SK-N-SH (cell line): ENCODE measurements at regions of chr17 and their contacts with region 1.

Region 1: DNA sequence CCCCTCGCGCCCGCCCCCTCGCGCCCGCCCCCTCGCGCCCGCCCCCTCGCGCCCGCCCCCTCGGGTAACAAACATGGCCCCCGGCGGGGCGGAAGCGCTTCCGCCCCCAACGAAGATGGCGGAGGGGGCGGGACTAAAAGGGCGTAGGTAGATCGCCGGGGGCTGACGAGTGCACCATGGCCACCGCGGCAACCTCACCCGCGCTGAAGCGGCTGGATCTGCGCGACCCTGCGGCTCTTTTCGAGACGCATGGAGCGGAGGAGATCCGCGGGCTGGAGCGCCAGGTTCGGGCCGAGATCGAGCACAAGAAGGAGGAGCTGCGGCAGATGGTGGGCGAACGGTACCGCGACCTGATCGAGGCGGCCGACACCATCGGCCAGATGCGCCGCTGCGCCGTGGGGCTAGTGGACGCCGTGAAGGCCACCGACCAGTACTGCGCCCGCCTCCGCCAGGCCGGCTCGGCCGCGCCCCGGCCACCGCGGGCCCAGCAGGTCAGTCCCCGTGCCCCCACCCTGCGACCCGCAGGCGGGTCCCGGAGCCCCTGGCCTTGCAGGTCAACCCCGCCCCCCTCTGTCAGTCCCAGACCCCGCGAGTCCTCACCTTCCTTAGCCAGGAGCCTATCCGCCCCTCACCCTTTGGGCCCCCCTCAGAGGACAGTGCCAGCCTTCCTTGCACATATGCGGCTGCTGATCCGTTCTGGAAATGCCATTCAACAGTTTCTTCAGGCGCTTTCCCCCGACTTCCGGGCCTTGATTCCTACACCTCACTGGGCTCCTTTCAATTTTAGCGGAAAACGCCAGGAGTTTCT is at the start of gene COG1:
- DNase-seq: peak; percentile 100
- H3K4me3 ChIP-seq: peak within 1 kb of the TSS; percentile 73 to 76
- H3K27ac ChIP-seq: peak within 1 kb of the TSS; percentile 85 to 95
- H3K4me1 ChIP-seq: peaks cover 5 to 8% of the 10 kb centered on the region in 2 experiments; a peak in 2 of 4 replicates
- H3K27me3 ChIP-seq: no peaks in the 10 kb centered on the region
- CTCF ChIP-seq: no peak
- EP300 ChIP-seq: no peak
- RAD21 ChIP-seq: no peak
- polyA plus RNA-seq, gene COG1: 52.8 and 53.1 TPM in 2 replicates

Region 2: DNA sequence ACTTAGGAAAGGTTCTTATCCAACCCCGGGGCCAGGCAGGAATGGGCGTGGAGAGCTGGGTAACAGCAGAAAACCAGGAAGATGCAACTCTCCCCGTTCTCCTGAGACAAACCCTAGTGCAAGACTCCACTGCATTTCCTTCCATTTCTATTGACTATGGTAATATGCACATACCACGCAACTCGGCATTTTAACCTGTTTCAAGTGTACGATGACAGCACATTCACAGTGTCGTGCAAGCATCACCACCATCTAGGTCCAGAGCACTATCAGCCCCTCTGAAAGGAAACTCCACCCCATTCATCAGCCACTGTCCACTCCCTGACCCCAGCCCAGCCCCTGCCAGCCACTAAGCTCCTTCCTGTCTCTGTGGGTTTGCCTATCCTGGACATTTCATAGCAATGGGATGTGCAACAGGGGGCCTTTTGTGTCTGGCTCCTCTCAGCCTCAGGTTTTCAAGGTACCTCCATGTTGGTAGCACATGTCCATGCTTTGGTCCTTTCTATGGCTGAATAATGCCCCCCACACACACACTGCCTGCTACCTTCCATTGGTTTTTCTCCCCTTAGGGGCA is 630.4 kb before region 1 on chr17:
- CTCF ChIA-PET with region 1: interaction called, 79 read pairs
- POLR2A ChIA-PET with region 1: no interaction called
- DNase-seq: no peak
- H3K4me3 ChIP-seq: no peak overlapping the region
- H3K27ac ChIP-seq: no peak overlapping the region
- H3K4me1 ChIP-seq: peaks cover 0 to 5% of the 10 kb centered on the region in 2 experiments; a peak in 1 of 4 replicates
- H3K27me3 ChIP-seq: no peaks in the 10 kb centered on the region
- CTCF ChIP-seq: no peak
- EP300 ChIP-seq: no peak
- RAD21 ChIP-seq: no peak

Region 3: GRCh38 chr17:72952220-72952984 is 240.7 kb before region 1 on chr17:
- CTCF ChIA-PET with region 1: interaction called, 10 read pairs
- POLR2A ChIA-PET with region 1: no interaction called
- DNase-seq: no peak
- H3K4me3 ChIP-seq: no peak overlapping the region
- H3K27ac ChIP-seq: no peak overlapping the region
- H3K4me1 ChIP-seq: peaks cover 13 to 18% of the 10 kb centered on the region in 2 experiments; a peak in 3 of 4 replicates
- H3K27me3 ChIP-seq: no peaks in the 10 kb centered on the region
- CTCF ChIP-seq: no peak
- EP300 ChIP-seq: no peak
- RAD21 ChIP-seq: no peak

Region 4: DNA sequence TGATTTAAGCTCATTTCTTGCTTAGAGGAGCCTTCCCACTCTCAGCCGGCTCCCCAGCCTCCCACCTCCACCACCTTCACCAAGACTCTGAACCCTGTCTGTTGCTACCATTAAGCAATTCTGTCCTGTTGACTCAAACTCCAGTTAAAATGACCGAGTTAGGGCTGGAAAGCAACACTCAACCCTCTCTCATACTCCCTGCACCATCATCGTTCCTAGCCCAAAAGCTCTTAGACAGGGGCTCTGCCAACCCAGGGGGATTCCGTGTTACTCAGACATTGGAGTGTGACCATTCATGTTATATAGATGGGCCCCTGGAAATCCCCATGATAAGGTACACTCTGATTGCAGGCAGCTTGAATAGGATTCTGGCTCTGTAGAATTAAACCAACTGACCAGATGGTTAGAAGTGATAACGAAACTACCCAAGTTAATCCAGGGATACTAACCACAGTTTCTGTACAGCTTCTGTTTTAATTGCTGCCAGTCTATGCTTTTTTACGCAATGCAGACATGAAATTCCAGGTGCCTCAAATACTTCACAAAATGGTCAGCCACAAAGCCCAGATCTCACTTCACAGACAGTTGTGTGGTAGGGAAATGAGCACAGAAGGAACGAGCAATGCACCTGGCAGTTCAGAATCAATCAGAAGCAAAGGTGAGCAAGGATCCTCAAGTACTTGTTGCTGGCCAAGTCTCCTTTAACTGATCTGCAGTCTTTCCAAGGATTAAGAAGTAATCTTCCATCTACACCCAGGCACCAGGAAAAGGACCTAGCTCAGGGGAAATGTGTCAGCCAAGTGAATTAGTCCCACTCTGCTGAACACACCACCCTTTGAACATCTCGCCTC is 26.1 kb before region 1 on chr17:
- CTCF ChIA-PET with region 1: interaction called, 64 read pairs
- POLR2A ChIA-PET with region 1: interaction called, 7 read pairs
- DNase-seq: no peak
- H3K4me3 ChIP-seq: 0 out of 4 replicates have a peak overlapping the region, but pooled peaks of 1 of the 2 experiments have one; percentile 45
- H3K27ac ChIP-seq: no peak overlapping the region
- H3K4me1 ChIP-seq: peaks cover 0 to 22% of the 10 kb centered on the region in 2 experiments; a peak in 1 of 4 replicates
- H3K27me3 ChIP-seq: peaks cover 34% of the 10 kb centered on the region
- CTCF ChIP-seq: no peak
- EP300 ChIP-seq: no peak
- RAD21 ChIP-seq: no peak

Region 5: DNA sequence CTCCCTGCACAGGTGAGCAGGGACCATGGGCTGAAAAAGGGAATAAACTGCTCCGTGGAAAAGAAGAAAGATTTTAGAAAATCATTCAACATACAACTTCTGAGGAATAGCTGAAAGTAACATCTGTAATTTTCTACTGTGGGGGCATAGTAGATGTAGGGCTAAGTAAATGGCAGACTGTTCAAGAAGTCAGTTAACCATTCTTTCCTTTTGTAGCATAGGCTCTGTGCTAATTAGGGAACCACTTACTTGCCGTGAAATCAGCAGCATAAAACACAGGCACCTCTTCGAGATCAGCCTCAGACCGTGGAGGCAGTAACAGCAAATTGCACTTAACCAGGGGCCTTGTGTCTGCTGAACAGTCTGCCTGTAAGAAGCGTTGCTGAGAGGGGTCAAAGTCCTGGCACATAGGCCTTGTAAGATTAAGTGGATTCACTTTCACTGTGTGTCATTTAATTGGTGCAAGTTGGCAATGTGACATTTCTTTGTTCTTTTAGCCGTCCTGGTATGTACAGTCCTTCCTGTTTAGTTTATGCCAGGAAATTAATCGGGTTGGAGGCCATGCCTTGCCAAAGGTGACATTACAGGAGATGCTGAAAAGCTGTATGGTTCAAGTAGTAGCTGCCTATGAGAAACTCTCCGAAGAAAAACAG is 10.2 kb after region 1 on chr17:
- CTCF ChIA-PET with region 1: interaction called, 14 read pairs
- POLR2A ChIA-PET with region 1: interaction called, 3 read pairs
- DNase-seq: no peak
- H3K4me3 ChIP-seq: no peak overlapping the region
- H3K27ac ChIP-seq: peak overlapping the region; percentile 1 to 11; a peak in 1 of 4 replicates
- H3K4me1 ChIP-seq: peaks cover 0 to 6% of the 10 kb centered on the region in 2 experiments; a peak in 1 of 4 replicates
- H3K27me3 ChIP-seq: no peaks in the 10 kb centered on the region
- CTCF ChIP-seq: no peak
- EP300 ChIP-seq: no peak
- RAD21 ChIP-seq: no peak

Region 6: GRCh38 chr17:73348829-73349095 is 155.7 kb after region 1 on chr17:
- CTCF ChIA-PET with region 1: no interaction called
- POLR2A ChIA-PET with region 1: no interaction called
- DNase-seq: no peak
- H3K4me3 ChIP-seq: no peak overlapping the region
- H3K27ac ChIP-seq: no peak overlapping the region
- H3K4me1 ChIP-seq: peaks cover 3 to 28% of the 10 kb centered on the region in 2 experiments; a peak in 2 of 4 replicates
- H3K27me3 ChIP-seq: no peaks in the 10 kb centered on the region
- CTCF ChIP-seq: no peak
- EP300 ChIP-seq: no peak
- RAD21 ChIP-seq: no peak

Region 7: DNA sequence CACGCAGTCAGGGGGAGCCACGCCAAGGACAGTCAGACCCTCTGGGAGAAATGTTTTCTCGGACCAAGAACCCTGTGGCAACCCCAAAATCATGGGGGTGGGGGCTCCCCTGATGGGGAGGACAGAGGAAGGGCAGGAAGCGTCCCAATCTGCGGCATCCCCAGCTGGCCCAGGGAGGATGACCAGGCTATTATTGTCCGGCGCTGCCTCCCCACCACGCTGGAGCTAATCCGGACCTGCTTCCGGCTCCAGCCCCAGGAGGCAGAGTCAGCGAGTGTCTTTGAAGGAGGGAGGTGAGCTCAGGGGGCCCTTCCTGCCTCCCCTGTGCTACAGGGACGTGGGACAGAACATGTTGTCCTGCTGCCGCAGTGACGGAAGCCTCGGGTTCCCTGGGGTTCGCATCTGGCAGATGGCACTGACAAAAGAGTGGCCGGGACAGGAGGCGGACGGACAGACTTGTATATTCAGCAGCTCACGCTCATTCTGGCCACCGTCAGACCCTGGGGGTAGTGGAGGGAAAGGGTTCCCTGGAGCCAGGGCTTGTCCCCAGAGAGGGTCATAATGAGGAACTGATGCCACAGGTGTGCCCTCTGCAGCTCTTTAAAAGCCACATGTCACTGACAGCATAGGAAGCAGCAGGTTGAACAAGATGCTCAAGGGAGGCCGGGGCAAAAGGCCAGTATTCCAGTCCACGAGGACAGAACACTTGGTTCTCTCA is 173.0 kb after region 1 on chr17:
- CTCF ChIA-PET with region 1: interaction called, 88 read pairs
- POLR2A ChIA-PET with region 1: no interaction called
- DNase-seq: no peak
- H3K4me3 ChIP-seq: no peak overlapping the region
- H3K27ac ChIP-seq: no peak overlapping the region
- H3K4me1 ChIP-seq: peaks cover 2 to 15% of the 10 kb centered on the region in 2 experiments; a peak in 2 of 4 replicates
- H3K27me3 ChIP-seq: 0 out of 2 replicates have a peak, but pooled peaks cover 7% of the 10 kb centered on the region
- CTCF ChIP-seq: no peak
- EP300 ChIP-seq: no peak
- RAD21 ChIP-seq: no peak

Region 8: DNA sequence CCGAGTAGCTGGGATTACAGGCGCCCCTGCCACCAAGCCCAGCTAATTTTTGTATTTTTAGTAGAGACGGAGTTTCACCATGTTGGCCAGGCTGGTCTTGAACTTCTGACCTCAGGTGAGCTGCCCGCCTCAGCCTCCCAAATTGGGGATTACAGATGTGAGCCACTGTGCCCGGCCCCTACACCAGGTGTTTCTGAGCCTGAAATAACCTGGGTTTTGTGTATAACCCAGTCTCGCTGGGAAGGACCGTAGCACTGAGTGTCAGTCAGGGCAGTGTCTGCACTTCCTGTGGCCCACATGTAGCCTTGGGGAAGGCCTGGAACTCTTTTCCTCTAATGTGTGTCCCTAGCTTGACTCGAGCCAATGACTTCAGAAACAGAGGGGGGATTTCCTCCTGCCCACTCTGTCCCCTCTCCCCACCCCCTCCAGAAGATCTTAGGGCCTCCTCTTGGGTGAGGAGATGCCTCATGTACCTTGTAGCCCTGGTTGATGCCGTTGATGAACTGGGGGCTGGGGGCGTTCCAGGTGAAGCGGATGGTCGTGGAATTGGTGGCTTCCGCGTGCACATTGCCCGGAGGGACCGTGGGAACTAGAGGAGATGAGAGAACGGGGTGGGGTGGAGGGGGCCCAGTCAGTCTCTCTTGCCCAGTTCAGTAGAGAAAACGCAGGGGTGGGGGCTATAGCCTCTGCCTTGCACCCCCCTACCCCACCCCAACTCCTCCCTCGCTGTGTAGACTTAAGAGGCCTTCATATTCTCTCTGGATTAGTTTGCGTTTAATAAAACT is 221.3 kb after region 1 on chr17:
- CTCF ChIA-PET with region 1: no interaction called
- POLR2A ChIA-PET with region 1: no interaction called
- DNase-seq: no peak
- H3K4me3 ChIP-seq: no peak overlapping the region
- H3K27ac ChIP-seq: no peak overlapping the region
- H3K4me1 ChIP-seq: no peaks in the 10 kb centered on the region
- H3K27me3 ChIP-seq: no peaks in the 10 kb centered on the region
- CTCF ChIP-seq: no peak
- EP300 ChIP-seq: no peak
- RAD21 ChIP-seq: no peak